Head of caudate nucleus (tissue), 42 donors: ENCODE measurements at regions of chr18 and their contacts with region 1.

Region 1: DNA sequence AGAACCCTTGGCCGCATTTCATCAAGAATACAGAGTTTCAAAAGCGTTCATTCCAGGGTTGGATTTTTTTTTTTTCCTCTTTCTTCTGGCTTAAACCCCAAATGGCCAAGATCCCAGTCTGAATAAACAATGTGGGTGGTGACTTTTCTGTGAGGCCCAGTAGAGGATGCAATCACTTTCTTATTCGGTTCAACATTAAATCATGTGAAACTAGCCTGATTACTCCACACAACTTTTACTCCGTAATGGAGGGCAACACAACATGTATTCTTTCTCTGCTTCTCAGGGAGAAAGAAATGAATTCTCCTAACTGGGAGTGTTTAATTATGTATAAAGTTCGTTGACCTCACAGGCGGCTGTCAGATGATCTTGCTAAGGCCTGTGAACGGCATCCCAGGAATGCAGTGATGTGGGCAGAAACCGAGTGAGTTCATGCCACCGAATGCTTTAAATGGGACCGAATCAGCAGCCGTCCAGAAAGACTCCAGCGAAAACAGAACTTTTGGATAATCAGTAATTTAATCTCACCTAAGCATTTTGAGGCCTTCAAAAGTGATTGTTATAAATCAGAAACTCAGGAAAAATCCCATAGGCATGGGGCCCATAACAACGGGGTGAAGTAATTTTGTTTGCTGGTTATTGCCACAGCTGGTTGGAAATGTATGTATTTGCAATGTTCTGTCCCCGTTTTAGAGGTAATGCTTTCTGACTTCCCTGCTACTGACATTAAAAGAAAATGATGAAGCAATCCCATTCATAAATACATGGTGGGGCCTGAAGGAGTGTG is 81.5 kb downstream of the BCL2 start:
- DNase-seq: peak in 13 of 42 donors; percentile 12 to 70 (median 39)

Region 2: GRCh38 chr18:63141778-63142176 is 96.3 kb before region 1 on chr18:
- intact Hi-C with region 1: loop called (anchors 10 kb)
- DNase-seq: no peak

Region 3: DNA sequence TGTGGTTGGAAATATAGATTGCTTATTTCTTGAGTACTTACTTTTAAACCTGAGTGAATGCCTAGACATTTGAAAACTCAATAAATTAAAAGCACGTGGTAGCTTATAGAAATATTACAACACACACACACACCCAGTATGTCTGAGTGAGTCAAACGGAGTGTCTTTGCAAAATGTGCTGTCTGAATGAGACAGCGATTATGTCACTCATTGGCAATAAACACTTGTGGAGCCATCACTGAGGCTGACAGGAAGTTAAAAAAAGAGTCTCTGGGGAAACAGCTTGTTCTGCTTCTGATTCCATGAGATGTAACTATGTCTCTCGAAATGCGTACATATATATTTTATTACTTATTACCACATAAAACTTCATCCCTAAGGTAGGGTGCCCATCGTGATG is 206.5 kb after region 1 on chr18:
- intact Hi-C with region 1: no loop called
- DNase-seq: no peak

Region 4: DNA sequence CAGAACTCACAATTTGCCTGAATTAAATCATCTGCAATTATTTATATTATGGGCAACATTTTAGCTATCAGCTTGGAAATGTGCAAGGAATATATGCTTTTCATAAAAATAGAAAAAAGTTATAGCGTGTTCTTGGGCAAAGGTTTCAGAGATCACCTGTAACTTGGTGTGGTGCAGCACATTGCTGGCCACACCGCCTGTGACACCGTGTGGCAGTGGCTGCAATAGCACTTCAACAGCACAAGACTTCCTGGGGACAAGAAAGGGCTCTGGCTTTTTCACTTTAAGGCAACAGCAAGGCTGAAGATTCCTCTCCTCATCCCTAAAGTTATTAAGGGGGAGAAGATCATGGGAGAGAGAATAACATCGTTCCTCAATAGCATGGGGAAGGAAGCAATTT is 438.5 kb after region 1 on chr18:
- intact Hi-C with region 1: no loop called
- DNase-seq: no peak